ENCODE measurements at regions of chr22 and their contacts with region 1.

Region 1: GRCh38 chr22:31814942-31815341 is 61.1 kb downstream of the DEPDC5 start:
- DNase-seq: no peak
- ATAC-seq: no peak
- H3K4me3 ChIP-seq: no peak overlapping the region
- H3K4me3 Mint-ChIP-seq: no peak overlapping the region
- H3K27ac ChIP-seq: no peak overlapping the region
- H3K27ac Mint-ChIP-seq: no peak overlapping the region
- H3K4me1 ChIP-seq: no peaks in the 10 kb centered on the region
- H3K4me1 Mint-ChIP-seq: peaks cover 0 to 4% (median 0%) of the 10 kb centered on the region in 3 donors
- H3K27me3 ChIP-seq: no peaks in the 10 kb centered on the region
- H3K27me3 Mint-ChIP-seq: no peaks in the 10 kb centered on the region

Region 2: GRCh38 chr22:31749636-31750364 is 65.1 kb before region 1 on chr22 and contains the start of gene PRR14L:
- CTCF ChIA-PET with region 1: no interaction called
- POLR2A ChIA-PET with region 1: no interaction called
- DNase-seq: peak; percentile 93 to 99 (median 97)
- ATAC-seq: peak; percentile 68 to 78 (median 72)
- H3K4me3 ChIP-seq: peak within 1 kb of the TSS; percentile 92 to 98
- H3K4me3 Mint-ChIP-seq: peak within 1 kb of the TSS; percentile 74 to 95 (median 90)
- H3K27ac ChIP-seq: peak within 1 kb of the TSS; percentile 73
- H3K27ac Mint-ChIP-seq: peak within 1 kb of the TSS; percentile 95 to 96
- H3K4me1 ChIP-seq: peaks cover 25 to 44% of the 10 kb centered on the region in 2 experiments
- H3K4me1 Mint-ChIP-seq: peaks cover 54 to 59% (median 58%) of the 10 kb centered on the region in 3 donors
- H3K27me3 ChIP-seq: no peaks in the 10 kb centered on the region
- H3K27me3 Mint-ChIP-seq: no peaks in the 10 kb centered on the region
- total RNA-seq, gene PRR14L: 48.0 to 63.0 (median 55.6) TPM

Region 3: DNA sequence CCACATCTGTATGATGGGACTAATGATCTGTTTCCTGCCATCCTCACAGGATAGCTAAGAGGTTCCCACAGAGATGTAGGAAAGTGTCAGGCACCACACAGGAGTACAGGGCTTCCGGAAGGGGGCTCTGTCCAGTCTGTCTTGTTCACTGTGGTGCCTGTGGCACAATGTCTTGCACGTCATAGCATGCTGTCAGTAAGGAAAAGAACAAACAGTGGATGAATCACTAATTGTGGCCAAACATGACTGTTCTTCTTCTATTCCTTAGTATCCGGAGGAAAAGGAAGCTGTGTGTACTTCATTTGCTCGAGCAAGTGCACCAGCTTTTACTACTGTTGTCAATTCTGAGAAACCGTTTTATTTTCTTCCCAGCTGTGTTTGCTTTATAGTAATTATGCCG is 55.9 kb after region 1 on chr22:
- CTCF ChIA-PET with region 1: no interaction called
- POLR2A ChIA-PET with region 1: interaction called in 1 of 2 experiments, 11 read pairs
- DNase-seq: no peak
- ATAC-seq: no peak
- H3K4me3 ChIP-seq: no peak overlapping the region
- H3K4me3 Mint-ChIP-seq: no peak overlapping the region
- H3K27ac ChIP-seq: no peak overlapping the region
- H3K27ac Mint-ChIP-seq: no peak overlapping the region
- H3K4me1 ChIP-seq: no peaks in the 10 kb centered on the region
- H3K4me1 Mint-ChIP-seq: peaks cover 0 to under 1% (median 0%) of the 10 kb centered on the region in 3 donors
- H3K27me3 ChIP-seq: no peaks in the 10 kb centered on the region
- H3K27me3 Mint-ChIP-seq: no peaks in the 10 kb centered on the region

Measured in T-cell (primary cell).